B cell (primary cell): ENCODE measurements at regions of chr5 and their contacts with region 1.

Region 1: DNA sequence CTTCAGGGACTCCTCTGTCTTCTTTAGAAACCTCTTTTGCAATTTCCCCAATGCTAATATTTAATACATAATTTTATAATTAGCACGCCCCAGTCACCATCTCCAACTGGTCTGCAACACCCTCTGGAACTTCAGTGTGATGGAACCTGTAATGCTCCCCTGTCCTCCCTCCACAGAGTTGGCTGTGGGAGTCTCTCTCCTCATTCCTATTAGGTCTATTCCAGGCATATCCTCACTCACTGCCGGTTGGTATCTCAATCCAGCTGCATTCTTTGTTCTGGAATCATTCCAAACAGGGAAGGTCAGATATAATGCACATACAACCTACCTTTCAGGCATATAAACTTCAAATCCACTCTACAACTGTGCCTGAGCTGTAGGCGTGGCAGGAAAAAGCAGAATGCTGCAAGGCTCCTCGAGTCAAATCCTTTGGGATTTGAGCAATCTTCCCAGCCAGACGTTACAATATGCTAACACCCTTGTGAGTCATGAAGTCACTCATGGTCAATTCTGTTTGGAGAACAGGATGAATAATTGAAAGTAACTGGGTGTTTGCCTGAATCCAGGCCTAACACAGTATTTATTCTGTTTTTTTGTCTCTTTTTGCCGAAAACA is 293.8 kb downstream of the CWC27 start:
- DNase-seq: no peak
- ATAC-seq: no peak
- H3K4me3 ChIP-seq: no peak overlapping the region
- H3K4me3 Mint-ChIP-seq: no peak overlapping the region
- H3K27ac ChIP-seq: peak overlapping the region; percentile 70 to 91
- H3K27ac Mint-ChIP-seq: peak overlapping the region; percentile 59
- H3K4me1 ChIP-seq: peaks cover 61% of the 10 kb centered on the region in 2 donors
- H3K4me1 Mint-ChIP-seq: peaks cover 73% of the 10 kb centered on the region
- H3K27me3 ChIP-seq: no peaks in the 10 kb centered on the region
- H3K27me3 Mint-ChIP-seq: no peaks in the 10 kb centered on the region
- CTCF ChIP-seq: no peak

Region 2: DNA sequence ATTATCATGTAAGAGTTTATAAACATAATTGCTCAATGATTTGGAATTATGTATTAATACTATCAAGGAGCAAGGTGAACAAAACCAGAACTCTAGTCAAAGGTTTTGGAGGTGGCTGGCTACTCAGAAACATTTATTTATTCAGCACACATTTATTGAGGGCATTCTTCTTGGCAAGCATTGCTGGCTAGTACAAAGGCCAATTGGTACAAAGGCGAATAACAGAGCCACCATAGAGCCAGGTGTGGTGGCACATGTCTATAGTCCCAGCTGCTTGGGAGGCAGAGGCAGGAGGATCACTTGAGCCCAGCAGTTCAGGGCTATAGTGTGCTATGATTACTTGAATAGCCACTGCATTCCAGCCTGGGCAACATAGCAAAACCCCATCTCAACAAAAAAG is 51.7 kb before region 1 on chr5:
- CTCF ChIA-PET with region 1: no interaction called
- POLR2A ChIA-PET with region 1: no interaction called
- intact Hi-C with region 1: no loop called
- DNase-seq: no peak
- ATAC-seq: no peak
- H3K4me3 ChIP-seq: no peak overlapping the region
- H3K4me3 Mint-ChIP-seq: no peak overlapping the region
- H3K27ac ChIP-seq: no peak overlapping the region
- H3K27ac Mint-ChIP-seq: no peak overlapping the region
- H3K4me1 ChIP-seq: no peaks in the 10 kb centered on the region
- H3K4me1 Mint-ChIP-seq: no peaks in the 10 kb centered on the region
- H3K27me3 ChIP-seq: no peaks in the 10 kb centered on the region
- H3K27me3 Mint-ChIP-seq: no peaks in the 10 kb centered on the region
- CTCF ChIP-seq: no peak

Region 3: GRCh38 chr5:65102828-65103711 is 40.5 kb after region 1 on chr5:
- CTCF ChIA-PET with region 1: no interaction called
- POLR2A ChIA-PET with region 1: interaction called, 3 read pairs
- intact Hi-C with region 1: loop called (anchors 5 kb)
- DNase-seq: peak; percentile 80
- ATAC-seq: peak; percentile 86
- H3K4me3 ChIP-seq: peak overlapping the region; percentile 40 to 76 (median 67)
- H3K4me3 Mint-ChIP-seq: peak overlapping the region; percentile 89
- H3K27ac ChIP-seq: peak overlapping the region; percentile 84 to 91
- H3K27ac Mint-ChIP-seq: peak overlapping the region; percentile 93
- H3K4me1 ChIP-seq: peaks cover 23% of the 10 kb centered on the region in 2 donors
- H3K4me1 Mint-ChIP-seq: peaks cover 23% of the 10 kb centered on the region
- H3K27me3 ChIP-seq: no peaks in the 10 kb centered on the region
- H3K27me3 Mint-ChIP-seq: no peaks in the 10 kb centered on the region
- CTCF ChIP-seq: no peak

Region 4: GRCh38 chr5:65961633-65962032 is 899.1 kb after region 1 on chr5:
- CTCF ChIA-PET with region 1: no interaction called
- POLR2A ChIA-PET with region 1: no interaction called
- intact Hi-C with region 1: no loop called
- DNase-seq: no peak
- ATAC-seq: peak; percentile 57
- H3K4me3 ChIP-seq: no peak overlapping the region
- H3K4me3 Mint-ChIP-seq: peak overlapping the region; percentile 8
- H3K27ac ChIP-seq: peak overlapping the region in 1 of 2 donors; percentile 14
- H3K27ac Mint-ChIP-seq: no peak overlapping the region
- H3K4me1 ChIP-seq: peaks cover 0 to 15% of the 10 kb centered on the region in 2 donors
- H3K4me1 Mint-ChIP-seq: peaks cover 52% of the 10 kb centered on the region
- H3K27me3 ChIP-seq: no peaks in the 10 kb centered on the region
- H3K27me3 Mint-ChIP-seq: no peaks in the 10 kb centered on the region
- CTCF ChIP-seq: no peak